PC-9 (cell line): ENCODE measurements at regions of chr4 and their contacts with region 1.

Region 1: GRCh38 chr4:20337261-20337664 is 85.6 kb downstream of the SLIT2 start:
- DNase-seq: no peak
- H3K4me3 ChIP-seq: no peak overlapping the region
- H3K27ac ChIP-seq: no peak overlapping the region
- H3K4me1 ChIP-seq: no peaks in the 10 kb centered on the region
- H3K27me3 ChIP-seq: no peaks in the 10 kb centered on the region
- CTCF ChIP-seq: no peak

Region 2: DNA sequence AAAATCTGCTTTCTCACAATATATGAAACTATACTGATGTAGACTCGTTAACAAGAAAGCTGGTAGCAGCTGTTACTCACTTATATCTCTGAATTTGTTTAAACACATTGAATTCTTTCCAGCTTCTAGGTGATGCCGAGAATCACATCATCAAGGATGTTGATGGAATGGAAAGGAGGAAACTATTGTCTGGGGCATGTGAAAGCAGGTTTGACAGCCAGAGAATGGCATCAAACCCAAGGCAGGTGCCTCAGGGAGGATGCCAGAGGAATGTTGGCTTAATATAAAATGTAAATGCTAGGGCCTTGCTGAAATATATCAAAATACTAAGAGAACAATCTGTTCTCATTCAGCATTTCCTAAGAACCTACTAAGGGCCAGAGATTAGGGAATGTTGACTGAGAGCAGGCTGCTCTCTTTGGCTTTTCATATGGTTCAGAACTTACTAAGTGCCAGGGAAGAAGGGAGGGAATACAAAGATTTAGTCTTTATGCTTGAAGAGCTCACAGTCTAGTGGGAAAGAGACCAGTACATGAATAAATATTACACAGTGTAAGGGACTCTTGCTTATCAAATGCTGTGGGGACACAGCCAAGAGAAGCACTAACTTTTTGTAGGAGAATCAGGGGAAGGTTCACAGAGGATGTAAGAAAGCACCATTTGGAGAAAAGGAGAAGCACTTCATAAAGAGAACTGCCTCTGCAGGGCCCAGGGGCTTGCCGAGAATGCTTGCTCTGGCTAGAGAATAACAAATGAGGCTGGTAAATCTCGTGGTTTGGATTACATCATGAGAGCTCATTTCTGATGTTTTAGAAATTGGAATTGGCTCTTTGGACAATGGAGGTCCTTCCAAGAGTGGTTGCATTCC is 70.8 kb before region 1 on chr4:
- CTCF ChIA-PET with region 1: no interaction called
- POLR2A ChIA-PET with region 1: no interaction called
- intact Hi-C with region 1: no loop called
- DNase-seq: no peak
- H3K4me3 ChIP-seq: no peak overlapping the region
- H3K27ac ChIP-seq: no peak overlapping the region
- H3K4me1 ChIP-seq: no peaks in the 10 kb centered on the region
- H3K27me3 ChIP-seq: no peaks in the 10 kb centered on the region
- CTCF ChIP-seq: no peak

Region 3: DNA sequence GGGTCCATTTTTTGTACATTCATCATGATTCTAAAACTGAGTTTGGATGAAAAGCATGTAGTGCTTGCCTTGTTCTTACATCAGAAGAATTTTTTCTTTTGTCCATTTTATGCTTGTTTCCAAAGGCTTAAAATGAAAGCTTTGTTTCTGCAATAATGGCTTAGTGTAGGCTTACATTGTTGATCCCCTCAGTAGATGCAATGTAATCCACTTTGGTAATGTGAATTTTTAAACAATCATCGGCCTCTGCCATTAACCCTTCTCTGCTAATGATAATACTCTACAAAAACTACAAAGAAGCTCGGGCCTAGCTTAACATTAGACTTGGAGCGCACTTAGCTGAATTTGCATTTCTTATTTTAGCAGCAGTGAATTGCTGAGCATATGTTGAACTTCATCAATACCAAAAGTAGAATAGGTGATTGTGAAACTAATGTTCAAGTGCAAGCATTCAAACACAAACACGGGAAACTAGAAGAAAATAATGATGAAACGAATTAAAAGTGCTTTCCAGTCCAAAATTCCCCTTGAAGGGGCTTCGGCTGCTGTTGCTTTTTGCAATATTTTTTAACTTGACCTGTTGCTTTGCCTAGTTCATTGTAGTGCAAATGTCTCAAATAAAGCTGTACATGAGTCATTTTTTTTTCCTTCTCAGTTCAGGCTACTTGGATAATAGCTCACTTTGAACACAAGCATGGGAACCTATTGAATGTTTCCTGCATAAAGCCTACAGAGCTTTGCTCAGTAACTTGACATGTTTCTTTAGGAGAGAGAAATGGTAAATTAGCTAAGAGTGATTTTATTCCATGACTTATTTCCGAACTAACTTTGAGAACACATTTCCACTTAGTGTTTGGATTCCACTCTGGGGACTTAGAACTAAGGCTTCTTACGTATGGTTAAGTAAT is 19.0 kb before region 1 on chr4:
- CTCF ChIA-PET with region 1: no interaction called
- POLR2A ChIA-PET with region 1: interaction called, 11 read pairs
- intact Hi-C with region 1: no loop called
- DNase-seq: no peak
- H3K4me3 ChIP-seq: no peak overlapping the region
- H3K27ac ChIP-seq: no peak overlapping the region
- H3K4me1 ChIP-seq: no peaks in the 10 kb centered on the region
- H3K27me3 ChIP-seq: no peaks in the 10 kb centered on the region
- CTCF ChIP-seq: no peak

Region 4: GRCh38 chr4:20378181-20378580 is 40.9 kb after region 1 on chr4:
- CTCF ChIA-PET with region 1: no interaction called
- POLR2A ChIA-PET with region 1: no interaction called
- intact Hi-C with region 1: no loop called
- DNase-seq: no peak
- H3K4me3 ChIP-seq: no peak overlapping the region
- H3K27ac ChIP-seq: no peak overlapping the region
- H3K4me1 ChIP-seq: no peaks in the 10 kb centered on the region
- H3K27me3 ChIP-seq: no peaks in the 10 kb centered on the region
- CTCF ChIP-seq: no peak

Region 5: DNA sequence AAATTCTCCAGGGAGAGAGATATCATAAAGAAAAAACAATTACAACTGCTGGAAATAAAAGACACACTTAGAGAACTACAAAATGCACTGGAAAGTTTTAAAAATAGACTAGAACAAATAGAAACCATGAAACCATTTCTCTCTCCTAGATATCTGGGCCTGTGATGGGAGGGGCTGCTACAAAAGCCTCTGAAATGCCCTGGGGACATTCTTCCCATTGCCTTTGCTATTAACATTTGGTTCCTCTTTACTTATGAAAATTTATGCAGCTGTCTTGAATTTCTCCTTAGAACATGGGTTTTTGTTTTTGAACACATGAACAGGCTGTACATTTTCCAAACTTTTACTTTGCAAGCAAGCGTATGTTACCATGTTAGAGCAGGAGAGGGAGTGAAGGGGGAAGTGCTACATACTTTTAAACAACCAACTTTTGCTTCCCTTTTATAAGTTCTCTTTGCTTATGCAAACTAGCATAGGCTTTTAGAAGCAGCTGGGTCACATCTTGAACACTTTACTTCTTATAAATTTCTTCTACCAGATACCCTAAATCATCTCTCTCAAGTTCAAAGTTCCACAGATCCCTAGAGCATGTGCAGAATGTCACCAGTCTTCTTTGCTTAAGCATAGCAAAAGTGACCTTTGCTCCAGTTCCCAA is 315.1 kb after region 1 on chr4:
- CTCF ChIA-PET with region 1: no interaction called
- POLR2A ChIA-PET with region 1: no interaction called
- intact Hi-C with region 1: no loop called
- DNase-seq: no peak
- H3K4me3 ChIP-seq: no peak overlapping the region
- H3K27ac ChIP-seq: no peak overlapping the region
- H3K4me1 ChIP-seq: no peaks in the 10 kb centered on the region
- H3K27me3 ChIP-seq: no peaks in the 10 kb centered on the region
- CTCF ChIP-seq: no peak